IMR-90 (cell line): ENCODE measurements at regions of chr1 and their contacts with region 1.

Region 1: GRCh38 chr1:65148548-65149350 is 746 bp downstream of the AK4 start:
- DNase-seq: peak; percentile 19
- ATAC-seq: peak; percentile 61
- H3K4me3 ChIP-seq: peak overlapping the region; percentile 98
- H3K27ac ChIP-seq: peak overlapping the region; percentile 60; the same call in 1 of the 2 replicates
- H3K4me1 ChIP-seq: no peaks in the 10 kb centered on the region; the same call in 1 of the 2 replicates
- H3K27me3 ChIP-seq: peaks cover 29% of the 10 kb centered on the region
- CTCF ChIP-seq: no peak
- POLR2A ChIP-seq: no peak
- RAD21 ChIP-seq: no peak

Region 2: DNA sequence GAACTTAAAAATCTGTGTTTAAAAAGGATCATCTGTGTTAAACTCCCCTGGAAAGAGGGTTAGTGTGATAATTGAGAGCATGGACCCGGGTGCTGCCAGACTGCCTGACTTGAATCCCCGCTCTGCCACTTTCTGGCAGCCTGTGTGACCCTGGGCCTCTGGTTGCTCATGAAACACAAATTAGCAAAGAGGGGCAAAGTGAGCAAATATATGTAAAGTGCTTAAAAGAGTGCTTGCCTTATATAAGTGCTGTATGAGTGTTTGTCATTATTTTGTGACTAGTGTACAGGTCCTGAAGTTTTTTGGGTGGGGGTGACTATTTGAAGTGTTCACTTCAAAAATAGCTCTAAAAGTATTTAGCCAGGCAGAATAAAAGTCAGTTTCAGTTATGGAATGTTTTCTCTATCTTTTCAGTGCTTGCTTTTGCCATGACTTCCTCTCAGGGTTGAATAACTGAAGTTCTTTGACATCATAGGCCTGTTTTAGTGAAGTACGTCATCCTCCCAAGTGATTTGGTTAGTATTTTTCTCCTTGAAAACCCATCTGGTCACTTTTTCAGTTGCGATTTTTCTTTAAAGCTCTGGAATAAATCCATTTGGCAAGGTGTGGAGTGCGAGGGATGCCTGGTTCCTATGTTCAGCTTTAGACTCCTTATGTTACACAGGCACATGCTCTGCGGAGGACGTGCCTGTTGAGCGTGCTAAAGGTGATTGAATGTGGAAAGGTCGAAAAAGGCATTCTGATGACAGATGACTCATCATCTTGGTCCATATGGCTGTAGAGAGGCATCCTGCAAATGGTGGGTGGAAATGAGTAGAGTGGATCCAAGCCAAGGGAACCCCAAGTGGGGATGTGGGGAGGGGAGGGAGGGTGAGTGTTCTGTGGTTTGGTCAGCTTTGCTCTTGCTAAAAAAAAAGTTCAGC is 47.0 kb after region 1 on chr1:
- CTCF ChIA-PET with region 1: no interaction called
- POLR2A ChIA-PET with region 1: no interaction called
- dilution Hi-C with region 1: no loop called
- in situ Hi-C with region 1: no loop called
- intact Hi-C with region 1: loop called (anchors 5 kb)
- DNase-seq: peak; percentile 89
- ATAC-seq: peak; percentile 38
- H3K4me3 ChIP-seq: no peak overlapping the region
- H3K27ac ChIP-seq: peak overlapping the region; percentile 58
- H3K4me1 ChIP-seq: peaks cover 12% of the 10 kb centered on the region; the same call in 1 of the 2 replicates
- H3K27me3 ChIP-seq: no peaks in the 10 kb centered on the region
- CTCF ChIP-seq: no peak
- POLR2A ChIP-seq: no peak
- RAD21 ChIP-seq: no peak